Panc1 (cell line): ENCODE measurements at regions of chr4 and their contacts with region 1.

Region 1: DNA sequence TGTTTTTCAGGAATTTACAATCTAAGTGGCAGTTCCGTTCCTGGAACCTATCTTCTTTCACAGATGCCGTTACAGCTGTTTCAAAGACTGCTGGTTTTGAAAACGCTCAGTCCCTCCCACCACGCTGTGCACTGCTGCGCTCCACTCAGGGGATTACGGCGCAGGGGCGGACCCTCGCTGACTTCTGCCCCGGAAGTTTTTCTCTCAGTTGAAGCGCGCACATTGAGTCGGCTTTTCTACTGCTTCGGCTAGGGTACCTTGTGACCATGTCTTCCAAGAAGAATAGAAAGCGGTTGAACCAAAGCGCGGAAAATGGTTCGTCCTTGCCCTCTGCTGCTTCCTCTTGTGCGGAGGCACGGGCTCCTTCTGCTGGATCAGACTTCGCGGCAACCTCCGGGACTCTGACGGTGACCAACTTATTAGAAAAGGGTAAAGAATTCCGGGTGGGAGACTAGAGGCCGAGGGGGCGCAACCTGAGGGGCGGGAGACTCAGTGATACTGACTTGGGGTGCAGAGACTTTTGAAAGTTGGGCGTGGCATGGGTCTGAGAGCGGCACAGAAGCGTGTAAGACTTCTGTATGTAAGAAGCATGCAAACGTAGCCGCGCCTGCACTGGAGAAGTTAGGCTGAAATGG is 597 bp upstream of the NUDT6 start:
- DNase-seq: no peak
- ATAC-seq: peak; percentile 97
- H3K4me3 ChIP-seq: peak overlapping the region; percentile 94 to 98
- H3K27ac ChIP-seq: peak overlapping the region; percentile 94
- H3K4me1 ChIP-seq: peaks cover 19% of the 10 kb centered on the region
- H3K27me3 ChIP-seq: no peaks in the 10 kb centered on the region
- CTCF ChIP-seq: no peak

Region 2: DNA sequence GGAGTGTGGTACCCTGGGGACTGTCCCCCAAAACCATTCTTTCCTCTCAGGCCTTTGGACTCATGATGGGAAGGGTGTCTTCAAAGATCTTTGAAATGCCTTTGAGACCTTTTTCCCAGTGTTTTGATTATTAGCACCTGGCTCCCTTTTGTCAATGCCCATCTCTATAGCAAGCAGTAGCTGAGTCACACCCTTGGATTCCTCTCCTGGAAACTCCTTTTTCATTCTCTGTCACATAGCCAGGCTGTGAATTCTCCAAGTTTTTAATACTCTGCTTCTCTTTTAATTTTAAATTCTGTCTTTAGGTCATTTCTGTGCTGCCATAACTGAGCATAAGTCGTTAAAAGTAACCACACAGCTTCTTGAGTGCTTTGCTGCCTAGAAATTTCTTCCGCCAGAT is 331.8 kb before region 1 on chr4:
- CTCF ChIA-PET with region 1: no interaction called
- POLR2A ChIA-PET with region 1: no interaction called
- in situ Hi-C with region 1: no loop called
- intact Hi-C with region 1: loop called (anchors 10 kb)
- DNase-seq: no peak
- ATAC-seq: no peak
- H3K4me3 ChIP-seq: no peak overlapping the region
- H3K27ac ChIP-seq: no peak overlapping the region
- H3K4me1 ChIP-seq: no peaks in the 10 kb centered on the region
- H3K27me3 ChIP-seq: no peaks in the 10 kb centered on the region; the same call in 1 of the 2 replicates
- CTCF ChIP-seq: no peak

Region 3: GRCh38 chr4:122732329-122733026 is 190.5 kb before region 1 on chr4 and contains the start of gene BBS12:
- CTCF ChIA-PET with region 1: no interaction called
- POLR2A ChIA-PET with region 1: interaction called, 13 read pairs
- in situ Hi-C with region 1: no loop called
- intact Hi-C with region 1: no loop called
- DNase-seq: peak; percentile 96
- ATAC-seq: peak; percentile 99
- H3K4me3 ChIP-seq: peak within 1 kb of the TSS; percentile 79 to 81
- H3K27ac ChIP-seq: peak within 1 kb of the TSS; percentile 79
- H3K4me1 ChIP-seq: peaks cover 5% of the 10 kb centered on the region
- H3K27me3 ChIP-seq: no peaks in the 10 kb centered on the region
- CTCF ChIP-seq: peak; percentile 68
- total RNA-seq, gene BBS12: 1.5 TPM

Region 4: DNA sequence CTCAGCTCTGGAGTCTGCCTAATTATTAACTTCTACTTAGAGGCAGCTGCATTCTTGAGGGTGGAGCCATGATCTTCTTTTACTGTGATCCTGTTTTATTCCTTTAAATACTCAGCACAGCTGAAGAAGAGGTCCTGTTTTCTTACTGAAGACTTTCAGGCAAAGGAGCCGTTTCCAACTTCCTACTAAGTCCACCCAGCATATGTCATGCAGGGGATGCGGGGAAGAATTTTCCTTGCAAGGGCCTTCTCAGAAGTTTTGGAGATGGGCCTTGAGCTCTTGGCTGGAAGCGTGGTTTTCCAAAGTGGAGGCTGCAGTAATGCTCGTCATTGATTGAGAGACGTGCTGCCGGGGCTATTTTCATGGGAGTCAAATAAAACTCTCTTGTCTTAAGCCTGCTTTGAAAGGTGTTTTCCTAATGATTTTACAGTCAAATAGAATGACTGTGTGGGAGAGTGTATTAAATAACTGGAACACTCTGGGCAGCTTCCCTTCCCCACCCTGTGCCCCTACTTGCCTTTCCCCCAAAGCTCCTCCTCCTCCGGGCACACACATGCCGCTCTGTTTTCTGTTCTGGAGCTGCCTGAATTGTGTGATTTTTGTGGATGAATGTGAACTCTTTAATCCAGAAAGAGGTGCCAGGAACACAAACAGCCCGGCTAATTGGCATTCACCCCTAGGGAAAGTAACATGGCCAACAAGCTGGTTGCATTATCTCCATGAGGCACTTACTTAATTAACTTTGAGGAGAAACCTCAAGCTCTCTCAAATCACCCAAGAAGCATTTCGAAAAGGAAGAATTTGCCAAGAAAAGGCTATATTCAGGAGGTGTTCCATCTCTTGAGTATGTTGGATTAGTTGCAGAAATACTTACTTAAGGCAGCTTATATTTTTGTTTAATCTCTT is 68.3 kb before region 1 on chr4:
- CTCF ChIA-PET with region 1: interaction called, 16 read pairs
- POLR2A ChIA-PET with region 1: no interaction called
- in situ Hi-C with region 1: no loop called
- intact Hi-C with region 1: no loop called
- DNase-seq: no peak
- ATAC-seq: peak; percentile 63
- H3K4me3 ChIP-seq: peak overlapping the region; percentile 4 to 41; a peak in 2 of 4 replicates
- H3K27ac ChIP-seq: peak overlapping the region; percentile 40; the same call in 1 of the 2 replicates
- H3K4me1 ChIP-seq: peaks cover 22% of the 10 kb centered on the region
- H3K27me3 ChIP-seq: no peaks in the 10 kb centered on the region
- CTCF ChIP-seq: no peak